Sciatic nerve (tissue), 2 donors: ENCODE measurements at regions of chr1 and their contacts with region 1.

Region 1: GRCh38 chr1:54996359-54996868 is 2.3 kb upstream of the BSND start:
- DNase-seq: peak; percentile 85
- ATAC-seq: peak; percentile 88

Region 2: GRCh38 chr1:54944610-54945544 is 51.5 kb before region 1 on chr1:
- intact Hi-C with region 1: loop called (anchors 10 kb)
- DNase-seq: peak; percentile 81
- ATAC-seq: peak; percentile 76

Region 3: DNA sequence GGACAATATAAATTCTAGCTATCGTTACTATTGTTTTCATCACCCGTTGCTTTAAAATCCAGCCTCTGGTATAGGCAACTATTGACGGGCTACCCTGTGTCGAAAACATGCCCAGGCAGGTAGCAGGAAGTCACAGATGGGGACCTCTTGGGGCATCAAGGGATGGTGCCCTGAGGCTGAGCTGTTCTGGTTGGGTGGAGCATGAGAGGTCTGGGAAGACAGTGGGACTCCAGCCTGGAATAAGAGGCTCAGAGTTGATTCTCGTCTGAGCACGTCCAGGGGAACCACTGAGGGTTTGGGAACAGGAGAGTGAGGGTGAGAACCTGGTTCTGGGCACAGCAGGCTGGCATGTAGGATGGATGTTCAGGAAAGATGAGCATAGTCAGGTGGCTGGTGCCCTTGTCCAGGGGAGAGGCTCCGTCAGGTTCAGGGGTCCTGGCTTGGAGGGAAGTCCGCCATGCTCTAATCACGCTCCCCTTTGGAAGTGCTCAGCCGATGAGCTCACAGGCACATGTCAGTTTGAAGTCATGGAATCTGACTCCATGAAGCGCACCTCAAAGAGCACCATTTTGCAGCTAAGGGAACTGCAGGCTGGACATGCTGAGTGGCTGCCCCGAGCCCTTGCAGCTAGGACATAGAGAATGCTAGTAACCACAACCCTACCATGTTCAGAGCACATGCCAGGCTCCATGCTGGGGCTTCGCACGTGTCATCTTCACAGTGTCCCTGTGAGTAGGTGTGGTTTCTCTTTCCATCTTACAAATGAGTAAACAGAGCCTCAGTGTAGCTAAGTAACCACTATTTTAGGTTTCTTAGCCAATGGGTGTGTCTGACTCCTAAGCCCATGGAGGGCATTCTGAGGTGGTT is 64.0 kb after region 1 on chr1:
- intact Hi-C with region 1: no loop called
- DNase-seq: no peak
- ATAC-seq: no peak

Region 4: DNA sequence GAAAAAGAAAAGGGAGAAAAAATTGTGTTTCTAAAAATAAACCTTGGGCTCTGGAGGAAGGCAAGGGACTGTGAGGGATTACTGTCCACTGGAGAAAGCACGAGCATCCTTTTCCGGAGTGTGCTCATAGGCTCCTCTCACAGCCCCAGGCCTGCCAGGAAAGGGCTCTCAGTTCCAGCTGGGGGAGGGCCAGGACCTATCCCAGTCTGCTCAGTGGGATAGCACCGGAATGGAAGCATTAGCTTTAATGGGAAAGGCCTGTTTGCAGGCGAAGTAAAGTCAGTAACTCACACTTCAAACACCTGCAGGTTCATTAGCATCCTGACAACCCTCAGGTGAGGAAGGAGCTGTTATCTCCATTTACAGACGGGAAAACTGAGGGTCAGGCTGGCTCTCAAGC is 332.7 kb after region 1 on chr1:
- intact Hi-C with region 1: no loop called
- DNase-seq: no peak
- ATAC-seq: peak; percentile 68